ENCODE measurements at regions of chr6 and their contacts with region 1.

Region 1: GRCh38 chr6:100479179-100480035 is 14.7 kb upstream of the SIM1 start:
- DNase-seq: no peak
- CTCF ChIP-seq: peak; percentile 78

Region 2: GRCh38 chr6:100001915-100002388 is 477.5 kb before region 1 on chr6:
- in situ Hi-C with region 1: loop called (anchors 25 kb)
- DNase-seq: peak; percentile 46
- CTCF ChIP-seq: peak; percentile 95

Region 3: DNA sequence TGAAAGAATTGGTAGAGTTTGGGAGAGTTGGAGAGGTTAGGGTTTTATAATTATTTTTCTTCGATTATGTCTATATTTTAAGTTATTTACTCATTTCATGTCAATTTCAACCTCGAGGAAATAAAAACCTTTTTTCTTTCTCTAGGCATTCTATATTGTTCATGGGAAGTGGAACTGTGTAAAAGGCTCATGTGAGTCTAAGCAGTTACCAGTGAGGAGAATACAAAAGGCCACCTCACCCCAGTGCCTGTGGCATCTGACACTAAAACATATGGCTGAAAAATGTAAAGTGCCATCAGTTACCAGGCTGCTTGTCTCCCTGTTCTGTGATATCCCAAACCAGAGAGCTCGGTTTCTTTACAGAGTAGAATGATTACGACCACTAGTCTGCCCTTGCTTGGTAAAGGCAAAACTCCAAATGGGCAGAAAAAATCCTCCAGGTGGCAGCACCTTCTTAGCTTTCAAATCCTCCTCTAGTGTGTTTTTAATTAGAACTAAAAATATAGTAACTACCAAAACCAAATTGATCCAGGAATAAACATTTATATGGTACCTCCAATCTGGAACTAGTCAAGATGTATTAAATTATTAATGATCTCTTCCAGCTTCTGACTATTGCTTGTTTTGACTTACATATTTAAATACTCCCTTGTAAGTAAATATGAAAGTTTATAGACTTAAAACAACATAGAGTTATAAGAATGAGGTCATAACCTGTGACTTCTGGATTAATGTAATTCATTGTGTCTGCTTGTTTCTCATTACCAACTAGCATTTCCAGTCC is 362.8 kb before region 1 on chr6:
- in situ Hi-C with region 1: loop called (anchors 10 kb)
- DNase-seq: peak; percentile 21
- CTCF ChIP-seq: peak; percentile 64

Region 4: DNA sequence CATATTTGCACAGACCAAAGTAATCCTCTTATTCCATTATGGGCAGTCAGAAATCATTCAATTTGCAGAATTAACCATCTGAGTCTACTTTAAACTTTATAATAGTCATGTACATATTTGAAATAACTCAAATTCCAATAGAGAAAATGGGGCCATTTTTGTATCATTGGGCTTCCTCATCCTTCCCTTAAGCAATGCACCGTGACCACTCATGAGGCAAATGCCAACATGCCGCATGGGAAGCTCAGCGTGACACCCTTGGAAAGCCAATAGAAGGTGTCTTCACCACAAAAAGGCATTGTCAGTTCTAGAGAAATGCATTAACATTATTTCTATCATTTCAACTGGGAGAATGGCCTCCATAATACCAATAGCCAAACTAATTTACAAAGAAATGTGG is 53.2 kb before region 1 on chr6:
- in situ Hi-C with region 1: no loop called
- DNase-seq: no peak
- CTCF ChIP-seq: no peak

Region 5: GRCh38 chr6:100633096-100633777 is 153.8 kb after region 1 on chr6:
- in situ Hi-C with region 1: no loop called
- DNase-seq: no peak
- CTCF ChIP-seq: no peak

Region 6: DNA sequence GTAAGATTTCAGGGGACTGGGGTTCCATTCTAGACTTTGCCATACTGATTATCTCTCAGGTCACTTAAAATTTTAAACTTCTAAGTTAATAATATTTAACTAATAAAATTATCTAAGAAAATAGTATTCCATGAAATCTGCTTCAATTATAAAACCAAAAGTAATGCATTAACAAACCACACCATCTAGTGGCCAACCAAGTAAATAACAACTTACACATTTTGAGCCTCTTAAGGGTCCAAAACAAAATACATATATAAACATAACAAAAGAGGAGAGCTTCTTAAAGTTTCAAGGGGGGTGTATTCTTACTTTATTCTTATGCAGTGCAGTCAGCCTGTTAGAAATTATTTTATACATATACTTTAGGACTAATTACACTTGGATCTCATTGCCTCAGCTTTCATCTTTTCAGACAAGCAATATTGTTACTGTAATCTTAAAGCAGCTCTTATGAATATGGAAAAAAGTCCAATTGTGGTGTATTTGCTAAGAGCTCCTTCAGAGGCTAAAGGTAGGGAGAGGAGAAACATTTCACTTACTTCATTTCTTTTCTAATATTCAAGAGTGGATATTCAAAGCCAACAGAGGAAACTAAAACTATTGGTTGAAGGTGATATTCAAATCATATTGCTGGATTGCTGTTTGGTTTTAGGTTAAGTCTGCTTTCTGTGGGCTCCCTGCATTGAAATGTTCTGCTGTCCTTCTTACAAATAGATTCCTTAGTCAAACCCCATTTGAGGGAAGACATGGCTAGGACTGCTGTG is 185.1 kb after region 1 on chr6:
- in situ Hi-C with region 1: loop called (anchors 25 kb)
- DNase-seq: no peak
- CTCF ChIP-seq: peak; percentile 51

Region 7: DNA sequence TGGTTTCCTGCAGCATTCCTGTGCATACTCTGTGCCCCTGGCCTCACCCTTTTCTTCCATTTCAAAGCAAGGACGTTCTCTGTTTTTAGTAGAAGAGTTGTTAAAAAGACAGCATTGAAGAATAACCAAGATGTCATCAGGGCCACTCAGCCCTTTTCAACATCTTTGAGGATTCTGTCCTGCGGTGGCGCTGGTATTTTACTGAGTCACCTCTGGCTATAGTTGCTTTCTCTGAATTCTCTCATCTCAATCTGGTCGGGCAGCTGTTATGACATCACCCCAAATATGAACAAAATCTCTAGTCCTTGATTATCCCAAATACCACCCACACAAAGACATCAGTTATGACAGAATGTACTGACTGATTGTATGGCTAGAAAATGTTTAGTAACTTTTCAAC is 1118.3 kb after region 1 on chr6:
- in situ Hi-C with region 1: no loop called
- DNase-seq: no peak
- CTCF ChIP-seq: no peak

Measured in GM13977 (cell line).